ENCODE measurements at regions of chr19 and their contacts with region 1.

Region 1: DNA sequence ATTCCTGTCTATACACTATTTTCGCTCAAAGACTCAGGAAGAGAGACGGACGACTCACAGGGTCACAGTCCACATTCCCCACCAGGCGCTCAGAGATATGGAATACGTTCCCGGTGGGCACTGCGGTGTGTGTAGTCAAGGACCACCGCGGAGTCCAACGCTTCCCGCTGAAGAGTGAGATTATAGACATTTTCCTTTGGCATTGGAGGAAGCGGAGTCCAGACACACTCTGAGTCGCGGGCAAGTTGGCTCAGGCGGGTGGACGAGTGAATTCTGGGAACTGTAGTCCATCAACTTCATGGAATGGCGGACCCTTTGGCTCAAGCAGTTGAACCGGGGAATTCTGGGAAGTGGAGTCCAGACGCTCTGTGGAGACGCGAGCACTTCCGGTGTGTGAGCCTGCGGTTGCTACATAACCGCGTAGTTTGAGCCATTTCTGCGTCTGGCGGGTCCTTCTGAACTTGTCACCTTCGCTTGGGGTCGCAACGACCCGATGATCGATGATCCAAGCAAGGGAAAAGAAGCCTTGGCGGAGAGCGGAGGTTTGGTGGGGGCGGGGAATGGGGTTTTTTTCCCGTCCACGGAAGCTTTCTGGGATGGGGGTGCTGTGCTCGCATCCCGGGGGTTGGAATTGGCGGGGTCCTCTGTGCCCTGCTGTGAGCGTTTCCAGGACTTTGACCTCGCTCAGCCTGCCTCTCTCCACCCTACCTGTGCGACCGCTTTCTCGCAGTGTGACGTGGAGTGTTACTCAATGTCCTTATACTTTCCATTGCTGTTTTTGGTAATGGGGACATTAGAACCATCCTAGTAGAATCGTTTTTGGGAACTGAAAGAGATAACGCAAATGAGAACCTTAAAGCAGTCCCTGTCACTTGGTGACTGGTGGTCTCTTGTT is at the start of gene ZNF230:
- DNase-seq: peak; percentile 81
- H3K4me3 Mint-ChIP-seq: peak within 1 kb of the TSS; percentile 100
- H3K27ac Mint-ChIP-seq: peak within 1 kb of the TSS; percentile 97
- H3K4me1 Mint-ChIP-seq: peaks cover 15% of the 10 kb centered on the region
- H3K27me3 Mint-ChIP-seq: no peaks in the 10 kb centered on the region
- total RNA-seq, gene ZNF230: 3.8 and 4.5 TPM in 2 replicates

Region 2: DNA sequence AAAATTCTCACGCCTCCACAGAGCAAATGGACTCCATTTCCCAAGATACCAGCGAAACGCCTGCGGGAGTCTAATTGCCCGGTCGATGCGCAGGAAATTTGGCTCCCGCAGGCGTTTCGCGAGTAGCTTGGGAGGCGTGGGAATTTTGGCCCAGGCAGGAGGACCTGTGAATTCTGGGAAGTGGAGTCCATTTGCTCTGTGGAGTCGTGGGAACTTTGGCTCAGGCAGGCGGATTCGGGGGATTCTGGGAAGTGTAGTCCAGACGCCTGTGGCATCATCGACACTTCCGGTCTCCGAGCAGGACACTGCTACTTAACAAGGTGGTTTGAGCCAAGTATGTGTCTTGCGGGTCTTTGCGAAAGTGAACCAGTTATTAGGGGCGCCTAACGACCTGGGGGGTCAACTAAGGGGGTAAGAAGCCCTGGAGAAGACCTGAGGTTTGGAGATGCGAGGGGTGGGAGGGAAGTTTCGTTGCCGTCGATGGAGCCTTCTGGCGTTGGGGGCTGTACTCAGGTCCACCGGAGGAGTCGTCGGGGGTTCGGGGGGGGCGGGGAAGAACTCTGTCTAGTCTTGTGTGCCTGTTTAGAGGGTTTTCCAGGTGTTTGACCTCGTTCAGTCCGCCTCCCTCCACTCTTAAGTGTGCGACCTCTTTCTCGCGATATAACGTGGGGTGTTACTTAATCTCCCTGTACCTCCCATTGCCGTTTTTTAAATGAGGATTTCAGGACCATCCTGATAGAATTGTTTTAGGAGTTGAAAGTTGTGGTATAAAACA is 18.7 kb before region 1 on chr19 and contains the start of gene ZNF155:
- intact Hi-C with region 1: loop called (anchors 1 kb)
- DNase-seq: peak; percentile 59
- H3K4me3 Mint-ChIP-seq: peak within 1 kb of the TSS; percentile 95
- H3K27ac Mint-ChIP-seq: peak within 1 kb of the TSS; percentile 90
- H3K4me1 Mint-ChIP-seq: peaks cover 9% of the 10 kb centered on the region
- H3K27me3 Mint-ChIP-seq: no peaks in the 10 kb centered on the region
- total RNA-seq, gene ZNF155: 4.7 and 5.5 TPM in 2 replicates

Region 3: GRCh38 chr19:44051654-44052402 is 49.0 kb after region 1 on chr19 and contains the start of gene ZNF223:
- intact Hi-C with region 1: loop called (anchors 2 kb)
- DNase-seq: no peak
- H3K4me3 Mint-ChIP-seq: peak within 1 kb of the TSS; percentile 76
- H3K27ac Mint-ChIP-seq: no peak within 1 kb of the TSS
- H3K4me1 Mint-ChIP-seq: peaks cover 6% of the 10 kb centered on the region
- H3K27me3 Mint-ChIP-seq: no peaks in the 10 kb centered on the region
- total RNA-seq, gene ZNF223: not detected in 2 replicates

Region 4: GRCh38 chr19:44093931-44094765 is 91.3 kb after region 1 on chr19 and contains the start of gene ZNF224:
- intact Hi-C with region 1: loop called (anchors 2 kb)
- DNase-seq: peak; percentile 76
- H3K4me3 Mint-ChIP-seq: peak within 1 kb of the TSS; percentile 98
- H3K27ac Mint-ChIP-seq: peak within 1 kb of the TSS; percentile 77
- H3K4me1 Mint-ChIP-seq: peaks cover 9% of the 10 kb centered on the region
- H3K27me3 Mint-ChIP-seq: no peaks in the 10 kb centered on the region
- total RNA-seq, gene ZNF224: 19.4 and 22.3 TPM in 2 replicates

Region 5: GRCh38 chr19:44164673-44165512 is 162.1 kb after region 1 on chr19 and contains the start of gene ZNF226:
- intact Hi-C with region 1: loop called (anchors 10 kb)
- DNase-seq: peak; percentile 71
- H3K4me3 Mint-ChIP-seq: peak within 1 kb of the TSS; percentile 85
- H3K27ac Mint-ChIP-seq: peak within 1 kb of the TSS; percentile 80
- H3K4me1 Mint-ChIP-seq: peaks cover 22% of the 10 kb centered on the region
- H3K27me3 Mint-ChIP-seq: no peaks in the 10 kb centered on the region
- total RNA-seq, gene ZNF226: 6.6 and 9.8 TPM in 2 replicates